Aorta (tissue), 5 donors: ENCODE measurements at regions of chr7 and their contacts with region 1.

Region 1: DNA sequence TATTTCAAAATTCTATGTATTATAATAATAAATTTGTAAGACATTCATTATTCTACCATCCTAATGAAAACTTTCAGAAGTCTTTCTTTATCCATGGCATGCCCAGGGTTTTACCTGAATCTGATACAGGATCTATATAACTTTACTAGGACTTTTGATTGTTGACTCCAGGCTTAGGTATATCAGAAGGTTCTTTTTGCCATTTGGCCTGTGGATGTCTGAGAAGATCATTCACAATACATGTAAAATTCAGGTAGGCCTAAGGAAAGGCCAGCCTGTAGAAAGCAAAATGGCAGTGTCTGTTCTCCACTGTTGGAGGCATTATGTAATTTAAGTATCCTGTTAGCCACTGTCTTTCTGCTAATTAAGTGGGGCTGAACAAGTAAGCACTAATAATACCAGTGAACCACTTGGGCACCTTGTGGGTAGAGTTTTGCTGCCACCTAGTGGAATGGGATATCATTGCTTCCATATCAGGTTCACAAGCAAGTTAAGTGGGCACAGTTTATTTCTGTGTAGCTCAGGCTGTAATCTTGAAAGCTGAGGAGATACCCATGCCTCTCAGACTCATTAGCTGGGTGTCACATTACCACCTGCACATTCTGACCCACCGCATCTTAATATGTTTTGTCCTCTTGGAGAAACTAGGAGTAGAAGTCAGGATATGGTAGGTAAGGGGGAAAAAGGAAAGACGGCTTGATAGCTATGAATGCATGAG is 105.5 kb downstream of the SEPTIN7 start:
- DNase-seq: no peak
- ATAC-seq: peak; percentile 89
- H3K4me3 ChIP-seq: no peak overlapping the region
- H3K27ac ChIP-seq: no peak overlapping the region
- H3K4me1 ChIP-seq: no peaks in the 10 kb centered on the region
- H3K27me3 ChIP-seq: no peaks in the 10 kb centered on the region

Region 2: DNA sequence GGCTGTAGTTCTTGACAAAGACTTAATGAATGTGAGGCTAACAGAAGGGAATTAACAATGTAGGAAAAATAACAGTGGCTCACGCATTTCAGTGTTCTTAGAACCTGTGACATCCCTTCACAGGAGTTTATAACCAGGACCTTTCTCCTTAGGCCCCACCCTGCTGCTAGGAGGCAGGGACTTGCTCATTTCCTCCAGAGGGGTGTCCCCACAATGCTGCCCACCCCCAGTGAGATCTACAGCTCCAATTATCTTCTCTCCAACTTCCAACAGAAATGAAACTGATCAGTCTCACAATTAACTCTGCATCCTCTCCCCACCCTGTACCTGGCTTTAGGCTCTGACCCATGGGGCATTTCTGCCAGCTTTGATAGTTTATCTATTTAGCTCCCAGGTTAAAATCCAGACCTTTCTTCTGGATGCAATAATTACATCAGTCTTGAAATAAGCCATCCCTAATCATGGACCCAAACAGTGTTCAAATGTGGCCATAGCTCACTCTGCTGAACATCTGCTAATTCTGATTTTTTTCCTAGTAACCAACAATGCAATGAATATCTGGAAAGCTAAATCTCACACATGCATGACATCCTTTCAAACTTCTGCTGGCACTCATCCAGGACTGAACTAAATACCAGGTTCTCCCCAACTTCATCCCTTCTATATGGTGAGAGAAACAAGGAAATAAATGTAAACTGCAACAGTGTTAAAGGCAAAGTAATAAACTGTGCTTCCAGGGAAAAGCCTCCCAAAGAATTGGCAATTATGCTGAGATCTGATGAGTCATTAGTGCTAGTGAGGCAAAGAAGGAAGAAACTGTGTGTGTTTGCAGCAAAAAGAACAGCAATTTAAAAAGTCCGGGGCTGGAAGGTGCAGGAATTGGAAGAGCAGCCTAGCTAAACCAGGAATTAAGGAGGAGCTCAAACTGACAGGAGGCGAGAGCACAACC is 276.1 kb before region 1 on chr7:
- intact Hi-C with region 1: loop called in 1 of 2 experiments (anchors 10 kb)
- DNase-seq: no peak
- ATAC-seq: no peak
- H3K4me3 ChIP-seq: no peak overlapping the region
- H3K27ac ChIP-seq: no peak overlapping the region
- H3K4me1 ChIP-seq: no peaks in the 10 kb centered on the region
- H3K27me3 ChIP-seq: no peaks in the 10 kb centered on the region

Region 3: GRCh38 chr7:35707422-35707821 is 198.9 kb before region 1 on chr7:
- intact Hi-C with region 1: loop called (anchors 2 to 5 kb)
- DNase-seq: no peak
- ATAC-seq: no peak
- H3K4me3 ChIP-seq: no peak overlapping the region
- H3K27ac ChIP-seq: no peak overlapping the region
- H3K4me1 ChIP-seq: no peaks in the 10 kb centered on the region
- H3K27me3 ChIP-seq: no peaks in the 10 kb centered on the region

Region 4: DNA sequence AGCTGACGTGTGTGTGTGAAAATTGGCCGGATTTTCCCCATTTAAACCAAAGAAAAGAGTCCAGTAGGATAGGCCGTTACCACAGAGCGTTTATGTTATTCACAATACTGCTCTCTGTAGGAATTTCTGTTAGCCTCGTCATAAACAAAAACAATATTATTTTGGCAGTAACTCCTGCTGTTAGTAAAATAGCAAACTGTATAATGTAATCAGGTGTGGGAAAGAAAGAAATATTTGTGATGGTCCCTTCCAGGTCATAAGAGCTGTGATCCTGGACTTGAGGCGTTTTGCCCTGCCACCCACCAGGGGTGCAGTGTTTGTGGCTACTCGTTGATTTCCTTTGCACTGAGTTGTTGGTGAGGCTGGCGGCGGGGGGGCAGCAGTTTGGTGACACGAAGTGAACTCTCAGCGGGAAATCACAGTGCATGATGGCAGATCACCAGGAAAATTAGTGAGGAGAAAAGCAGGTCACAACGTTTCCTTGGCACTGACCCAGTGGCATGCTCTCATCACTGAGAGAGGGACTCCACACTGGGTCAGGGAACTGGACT is 249.5 kb after region 1 on chr7:
- intact Hi-C with region 1: no loop called
- DNase-seq: peak in 1 of 2 donors; percentile 67
- ATAC-seq: no peak
- H3K4me3 ChIP-seq: peak overlapping the region; percentile 27 to 79
- H3K27ac ChIP-seq: peak overlapping the region in 1 of 2 donors; percentile 12
- H3K4me1 ChIP-seq: peaks cover 5 to 12% of the 10 kb centered on the region in 2 donors
- H3K27me3 ChIP-seq: no peaks in the 10 kb centered on the region